ENCODE measurements at regions of chr19 and their contacts with region 1.

Region 1: DNA sequence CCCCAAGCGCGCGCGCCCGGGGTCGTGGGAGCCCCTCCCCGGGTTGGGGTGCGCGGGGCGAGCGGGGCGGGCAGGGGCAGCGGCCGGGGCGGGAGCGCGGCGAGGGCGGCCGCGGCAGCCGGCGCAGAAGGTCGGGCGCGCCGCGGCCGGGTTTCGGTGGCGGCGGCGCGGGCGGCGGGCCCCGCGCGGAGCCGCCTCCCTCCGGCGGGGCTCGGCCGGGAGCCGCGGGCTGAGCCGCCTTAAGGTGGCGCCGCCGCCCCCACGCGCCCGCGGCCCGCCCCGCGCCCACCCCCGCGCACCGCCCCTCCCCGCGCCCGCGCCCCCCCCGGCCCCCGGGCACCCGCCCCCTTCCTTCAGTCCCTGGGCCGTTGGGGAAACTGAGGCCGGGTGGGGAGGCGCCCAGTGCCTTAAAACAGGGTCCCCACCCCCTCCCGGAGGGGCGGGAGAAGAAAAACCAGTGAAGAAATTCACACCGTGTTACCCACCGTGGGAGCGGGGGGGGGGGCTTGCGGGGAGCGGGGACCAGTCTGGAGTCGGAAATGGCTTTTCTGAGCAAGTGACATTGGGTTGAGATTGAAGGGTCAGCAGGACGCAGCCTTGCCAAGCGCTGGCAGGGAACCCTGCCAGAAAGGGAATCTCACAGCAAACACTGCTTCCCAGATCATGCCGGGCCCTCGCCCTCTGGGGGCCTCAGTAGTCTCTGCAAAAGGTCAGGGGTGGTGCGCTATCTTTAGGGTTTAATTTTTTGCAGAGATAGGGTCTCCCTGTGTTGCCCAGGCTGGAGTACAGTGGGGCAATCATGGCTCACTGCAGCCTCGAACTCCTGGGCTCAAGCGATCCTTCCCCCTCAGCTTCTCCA is at the start of gene TLE2:
- DNase-seq: no peak
- ATAC-seq: peak in 3 of 4 donors; percentile 14 to 47 (median 38)
- H3K4me3 ChIP-seq: peak within 1 kb of the TSS; percentile 56 to 90 (median 72)
- H3K27ac ChIP-seq: peak within 1 kb of the TSS in 10 of 12 donors; percentile 43 to 81 (median 62)
- H3K4me1 ChIP-seq: peaks cover 0 to 20% (median 8%) of the 10 kb centered on the region in 12 donors
- H3K27me3 ChIP-seq: peaks cover 0 to 29% (median 0%) of the 10 kb centered on the region in 9 donors
- CTCF ChIP-seq: no peak
- POLR2A ChIP-seq: no peak
- total RNA-seq, gene TLE2: 34.6 to 75.1 (median 40.5) TPM

Region 2: DNA sequence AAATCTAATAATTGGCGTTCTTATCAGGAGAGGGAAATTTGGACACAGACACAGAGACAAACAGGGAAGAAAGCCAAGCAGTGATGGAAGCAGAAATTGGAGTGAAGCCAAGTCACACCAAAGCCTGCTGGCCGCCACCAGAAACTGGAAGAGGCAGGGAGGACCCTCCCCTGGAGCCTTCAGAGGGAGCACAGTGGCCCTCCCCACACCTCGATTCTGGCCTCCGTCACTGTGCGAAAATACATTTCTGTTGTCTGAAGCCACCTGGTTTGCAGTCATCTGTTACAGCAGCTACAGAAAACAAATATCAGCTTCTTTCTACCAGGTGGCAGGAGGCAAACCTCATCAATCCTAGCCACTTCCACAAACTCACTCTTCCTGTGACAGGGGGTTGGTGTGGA is 60.2 kb before region 1 on chr19:
- intact Hi-C with region 1: loop called in 1 of 10 experiments (anchors 5 kb)
- DNase-seq: peak in 4 of 5 donors; percentile 76 to 81 (median 79)
- ATAC-seq: peak; percentile 52 to 75 (median 64)
- H3K4me3 ChIP-seq: peak overlapping the region in 4 of 12 donors; percentile 5 to 11 (median 10)
- H3K27ac ChIP-seq: peak overlapping the region; percentile 19 to 78 (median 68)
- H3K4me1 ChIP-seq: peaks cover 0 to 62% (median 46%) of the 10 kb centered on the region in 12 donors
- H3K27me3 ChIP-seq: no peaks in the 10 kb centered on the region
- CTCF ChIP-seq: no peak
- POLR2A ChIP-seq: peak in 1 of 2 donors; percentile 20

Region 3: GRCh38 chr19:2983351-2984195 is 45.7 kb before region 1 on chr19:
- intact Hi-C with region 1: loop called in 7 of 10 experiments (anchors 2 to 10 kb)
- DNase-seq: peak; percentile 67 to 84 (median 83)
- ATAC-seq: peak; percentile 24 to 71 (median 59)
- H3K4me3 ChIP-seq: peak overlapping the region in 10 of 12 donors; percentile 34 to 55 (median 46)
- H3K27ac ChIP-seq: peak overlapping the region; percentile 41 to 88 (median 76)
- H3K4me1 ChIP-seq: peaks cover 3 to 27% (median 23%) of the 10 kb centered on the region in 12 donors
- H3K27me3 ChIP-seq: peaks cover 0 to 11% (median 0%) of the 10 kb centered on the region in 9 donors
- CTCF ChIP-seq: no peak
- POLR2A ChIP-seq: no peak

Measured in heart left ventricle (tissue), 16 donors.